ENCODE measurements at regions of chr12 and their contacts with region 1.

Region 1: GRCh38 chr12:112900299-112901145 is 6.2 kb upstream of the OAS1 start:
- DNase-seq: peak; percentile 17 to 54
- H3K4me3 ChIP-seq: no peak overlapping the region
- H3K27ac ChIP-seq: no peak overlapping the region
- H3K4me1 ChIP-seq: no peaks in the 10 kb centered on the region
- H3K27me3 ChIP-seq: no peaks in the 10 kb centered on the region
- CTCF ChIP-seq: peak; percentile 2 to 80 (median 80)
- EP300 ChIP-seq: no peak
- POLR2A ChIP-seq: no peak
- RAD21 ChIP-seq: peak; percentile 73 to 82

Region 2: GRCh38 chr12:112798006-112798760 is 102.3 kb before region 1 on chr12:
- CTCF ChIA-PET with region 1: no interaction called
- POLR2A ChIA-PET with region 1: no interaction called
- DNase-seq: no peak
- H3K4me3 ChIP-seq: no peak overlapping the region
- H3K27ac ChIP-seq: no peak overlapping the region
- H3K4me1 ChIP-seq: peaks cover 2 to 10% (median 4%) of the 10 kb centered on the region in 4 experiments
- H3K27me3 ChIP-seq: no peaks in the 10 kb centered on the region; a peak in 1 of 7 replicates
- CTCF ChIP-seq: no peak
- EP300 ChIP-seq: no peak
- POLR2A ChIP-seq: no peak
- RAD21 ChIP-seq: no peak

Region 3: DNA sequence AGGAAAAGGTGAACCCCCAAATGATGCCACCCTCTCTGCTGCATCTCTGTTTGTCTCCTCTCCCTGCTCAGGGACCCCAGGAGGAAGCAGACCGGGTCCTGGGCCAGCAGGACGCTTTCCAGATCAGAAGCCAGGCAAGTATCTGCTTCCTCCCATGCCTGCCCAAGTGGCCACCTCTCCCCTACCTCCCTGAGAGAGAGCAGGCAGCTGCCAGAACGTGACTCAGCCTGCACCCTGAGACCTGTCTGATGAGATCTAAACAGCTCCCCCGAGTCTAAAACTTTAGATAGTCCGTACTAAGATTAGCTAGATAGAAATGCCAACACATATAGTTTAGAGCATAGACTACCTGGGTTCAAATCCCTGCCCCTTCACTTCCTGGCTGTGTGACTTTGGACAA is 24.9 kb before region 1 on chr12:
- CTCF ChIA-PET with region 1: interaction called, 10 read pairs
- POLR2A ChIA-PET with region 1: no interaction called
- DNase-seq: no peak
- H3K4me3 ChIP-seq: no peak overlapping the region
- H3K27ac ChIP-seq: no peak overlapping the region
- H3K4me1 ChIP-seq: peaks cover 0 to 3% (median 0%) of the 10 kb centered on the region in 4 experiments; a peak in 1 of 7 replicates
- H3K27me3 ChIP-seq: no peaks in the 10 kb centered on the region; a peak in 2 of 7 replicates
- CTCF ChIP-seq: no peak
- EP300 ChIP-seq: no peak
- POLR2A ChIP-seq: no peak
- RAD21 ChIP-seq: no peak

Region 4: GRCh38 chr12:112924986-112925385 is 24.5 kb after region 1 on chr12:
- CTCF ChIA-PET with region 1: interaction called, 10 read pairs
- POLR2A ChIA-PET with region 1: no interaction called
- DNase-seq: no peak
- H3K4me3 ChIP-seq: no peak overlapping the region
- H3K27ac ChIP-seq: no peak overlapping the region
- H3K4me1 ChIP-seq: no peaks in the 10 kb centered on the region
- H3K27me3 ChIP-seq: peaks cover 0 to 1% (median 0%) of the 10 kb centered on the region in 4 experiments; a peak in 1 of 7 replicates
- CTCF ChIP-seq: no peak
- EP300 ChIP-seq: no peak
- POLR2A ChIP-seq: no peak
- RAD21 ChIP-seq: no peak

Region 5: DNA sequence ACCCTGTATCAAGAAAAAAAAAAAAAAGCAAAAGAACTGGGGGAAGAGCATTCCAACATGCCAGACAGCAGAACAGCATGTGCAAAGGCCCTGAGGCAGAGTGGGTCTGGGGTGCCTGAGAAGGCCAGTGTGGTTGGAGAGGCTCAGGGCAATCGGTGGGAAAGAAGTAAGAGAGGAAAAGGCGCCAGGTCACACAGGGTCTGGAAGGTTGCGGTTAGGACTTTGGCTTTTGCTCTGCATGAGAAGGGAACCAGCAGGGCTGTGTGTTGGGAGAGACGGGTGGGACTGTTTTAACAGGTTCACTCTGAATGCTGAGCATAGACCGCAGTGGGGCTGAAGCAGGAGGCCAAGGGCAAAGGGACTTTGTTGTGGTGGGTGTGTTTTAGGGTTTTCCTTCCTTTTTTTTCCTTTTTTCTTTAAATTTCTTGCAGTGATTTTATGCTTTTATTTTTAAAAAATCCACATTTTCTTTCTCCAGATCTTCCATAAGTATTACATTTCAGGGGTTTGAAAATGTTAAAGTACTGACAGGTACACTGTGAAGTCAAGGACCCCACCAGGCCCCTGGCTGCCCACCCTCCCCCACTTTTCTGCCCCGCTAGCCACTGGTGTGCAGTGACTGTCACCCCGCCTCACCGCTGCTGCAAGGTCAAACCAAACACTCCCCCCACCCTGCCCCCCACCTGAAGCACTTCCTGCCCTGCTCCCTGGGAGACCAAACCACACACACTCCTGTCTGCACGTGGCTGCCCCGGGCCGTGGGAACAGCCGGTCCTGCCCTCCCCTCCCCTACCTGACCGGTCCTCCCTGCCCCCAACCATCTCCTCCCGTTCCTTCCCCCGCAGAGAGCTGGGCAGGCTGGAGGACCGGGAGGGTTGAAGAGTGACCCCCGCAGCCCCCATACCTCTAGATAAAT is 186.0 kb after region 1 on chr12:
- CTCF ChIA-PET with region 1: no interaction called
- POLR2A ChIA-PET with region 1: no interaction called
- DNase-seq: no peak
- H3K4me3 ChIP-seq: no peak overlapping the region
- H3K27ac ChIP-seq: no peak overlapping the region
- H3K4me1 ChIP-seq: peaks cover 0 to 10% (median 7%) of the 10 kb centered on the region in 4 experiments; a peak in 5 of 7 replicates
- H3K27me3 ChIP-seq: no peaks in the 10 kb centered on the region
- CTCF ChIP-seq: no peak
- EP300 ChIP-seq: no peak
- POLR2A ChIP-seq: no peak
- RAD21 ChIP-seq: no peak